ENCODE measurements at regions of chr16 and their contacts with region 1.

Region 1: DNA sequence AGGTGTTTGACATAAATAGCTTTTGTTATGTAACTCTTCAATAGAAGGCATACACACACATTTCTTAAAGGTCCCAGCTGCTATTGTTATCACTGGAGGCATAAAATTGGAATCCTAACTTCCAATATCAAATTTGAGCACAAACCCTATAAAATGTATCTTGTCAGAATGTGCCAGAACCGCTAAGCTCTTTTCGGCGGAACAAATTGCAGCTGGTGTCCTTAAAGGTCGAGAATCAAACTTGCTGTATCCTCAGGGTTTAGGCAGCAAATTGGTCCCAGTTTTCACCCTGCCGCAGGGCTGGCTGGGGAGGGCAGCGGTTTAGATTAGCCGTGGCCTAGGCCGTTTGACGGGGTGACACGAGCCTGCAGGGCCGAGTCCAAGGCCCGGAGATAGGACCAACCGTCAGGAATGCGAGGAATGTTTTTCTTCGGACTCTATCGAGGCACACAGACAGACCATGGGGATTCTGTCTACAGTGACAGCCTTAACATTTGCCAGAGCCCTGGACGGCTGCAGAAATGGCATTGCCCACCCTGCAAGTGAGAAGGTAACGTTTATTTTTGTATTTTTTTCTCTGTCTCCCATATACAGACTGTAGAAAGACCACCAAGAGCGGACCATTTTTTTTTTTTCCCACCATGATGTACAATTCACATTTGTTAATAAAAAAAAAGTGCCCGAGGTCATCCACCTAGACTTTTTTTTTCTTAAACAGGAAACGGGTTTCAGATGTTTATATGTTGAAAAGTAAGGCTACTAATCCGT is 297.1 kb downstream of the IRF8 start:
- DNase-seq: no peak
- H3K4me3 ChIP-seq: peak overlapping the region in 1 of 4 donors; percentile 17
- H3K27ac ChIP-seq: peak overlapping the region; percentile 81 to 91 (median 86)
- H3K4me1 ChIP-seq: peaks cover 0 to 5% (median 3%) of the 10 kb centered on the region in 4 donors
- H3K27me3 ChIP-seq: peaks cover 58% of the 10 kb centered on the region
- CTCF ChIP-seq: no peak
- EP300 ChIP-seq: no peak
- POLR2A ChIP-seq: no peak

Region 2: GRCh38 chr16:84555418-84556195 is 1640.4 kb before region 1 on chr16:
- in situ Hi-C with region 1: no loop called
- intact Hi-C with region 1: no loop called
- DNase-seq: no peak
- H3K4me3 ChIP-seq: no peak overlapping the region
- H3K27ac ChIP-seq: no peak overlapping the region
- H3K4me1 ChIP-seq: peaks cover 0 to 18% (median 9%) of the 10 kb centered on the region in 4 donors
- H3K27me3 ChIP-seq: no peaks in the 10 kb centered on the region
- CTCF ChIP-seq: no peak
- EP300 ChIP-seq: no peak
- POLR2A ChIP-seq: no peak

Region 3: GRCh38 chr16:86072328-86073102 is 123.5 kb before region 1 on chr16:
- in situ Hi-C with region 1: loop called in 1 of 4 experiments (anchors 10 kb)
- intact Hi-C with region 1: loop called (anchors 5 kb)
- DNase-seq: peak; percentile 69
- H3K4me3 ChIP-seq: no peak overlapping the region
- H3K27ac ChIP-seq: no peak overlapping the region
- H3K4me1 ChIP-seq: no peaks in the 10 kb centered on the region
- H3K27me3 ChIP-seq: no peaks in the 10 kb centered on the region
- CTCF ChIP-seq: peak; percentile 70 to 85 (median 81)
- EP300 ChIP-seq: no peak
- POLR2A ChIP-seq: no peak

Region 4: DNA sequence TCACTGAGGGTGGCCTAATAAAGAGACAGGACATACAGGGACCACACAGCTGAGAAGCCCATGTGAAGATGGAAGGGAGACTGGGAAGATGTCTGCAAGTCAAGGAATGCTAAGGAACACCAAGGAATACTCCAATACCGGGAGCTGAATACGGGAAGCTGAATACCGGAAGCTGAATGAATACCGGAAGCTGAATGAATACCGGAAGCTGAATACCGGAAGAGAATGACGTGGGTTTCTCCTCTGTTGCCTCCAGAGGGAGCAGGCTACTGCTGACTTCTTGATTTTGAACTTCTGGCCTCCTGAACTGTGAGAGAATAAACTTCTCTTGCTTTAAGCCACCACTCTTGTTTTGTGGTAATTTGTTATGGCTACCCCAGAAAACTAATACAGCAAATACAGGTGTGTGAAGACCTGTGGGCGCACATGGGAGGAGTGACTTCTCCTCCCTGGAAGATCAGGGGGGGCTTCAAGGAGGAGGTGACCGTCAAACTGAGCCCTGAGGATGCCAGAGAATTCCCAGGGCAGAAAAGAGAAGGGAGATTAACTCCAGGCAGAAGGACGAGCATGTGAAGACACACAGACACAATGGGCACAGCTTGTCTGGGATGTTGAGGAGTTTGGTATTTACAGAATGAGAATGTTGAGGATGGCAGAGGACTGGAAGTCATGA is 37.2 kb before region 1 on chr16:
- in situ Hi-C with region 1: no loop called
- intact Hi-C with region 1: loop called (anchors 5 kb)
- DNase-seq: no peak
- H3K4me3 ChIP-seq: no peak overlapping the region
- H3K27ac ChIP-seq: peak overlapping the region; percentile 61 to 87 (median 68)
- H3K4me1 ChIP-seq: peaks cover 0 to 10% (median 2%) of the 10 kb centered on the region in 4 donors
- H3K27me3 ChIP-seq: no peaks in the 10 kb centered on the region
- CTCF ChIP-seq: no peak
- EP300 ChIP-seq: no peak
- POLR2A ChIP-seq: no peak

Region 5: GRCh38 chr16:86300746-86301481 is 104.9 kb after region 1 on chr16:
- in situ Hi-C with region 1: no loop called
- intact Hi-C with region 1: loop called (anchors 5 kb)
- DNase-seq: no peak
- H3K4me3 ChIP-seq: peak overlapping the region in 1 of 4 donors; percentile 25
- H3K27ac ChIP-seq: peak overlapping the region; percentile 89 to 95 (median 92)
- H3K4me1 ChIP-seq: peaks cover 6 to 34% (median 13%) of the 10 kb centered on the region in 4 donors
- H3K27me3 ChIP-seq: peaks cover 25% of the 10 kb centered on the region
- CTCF ChIP-seq: no peak
- EP300 ChIP-seq: no peak
- POLR2A ChIP-seq: no peak